Activated CD4-positive, alpha-beta memory T cell treated with anti-CD3 and anti-CD28 coated beads, Interleukin-2, amount 10 ng/mL, durations not matched to agents 7 days and 5 days (primary cell): ENCODE measurements at regions of chr9 and their contacts with region 1.

Region 1: GRCh38 chr9:137632230-137633161 is 13.7 kb downstream of the EHMT1 start:
- DNase-seq: no peak
- H3K4me3 Mint-ChIP-seq: no peak overlapping the region
- H3K27ac Mint-ChIP-seq: no peak overlapping the region
- H3K4me1 Mint-ChIP-seq: peaks cover 47% of the 10 kb centered on the region
- H3K27me3 Mint-ChIP-seq: no peaks in the 10 kb centered on the region

Region 2: DNA sequence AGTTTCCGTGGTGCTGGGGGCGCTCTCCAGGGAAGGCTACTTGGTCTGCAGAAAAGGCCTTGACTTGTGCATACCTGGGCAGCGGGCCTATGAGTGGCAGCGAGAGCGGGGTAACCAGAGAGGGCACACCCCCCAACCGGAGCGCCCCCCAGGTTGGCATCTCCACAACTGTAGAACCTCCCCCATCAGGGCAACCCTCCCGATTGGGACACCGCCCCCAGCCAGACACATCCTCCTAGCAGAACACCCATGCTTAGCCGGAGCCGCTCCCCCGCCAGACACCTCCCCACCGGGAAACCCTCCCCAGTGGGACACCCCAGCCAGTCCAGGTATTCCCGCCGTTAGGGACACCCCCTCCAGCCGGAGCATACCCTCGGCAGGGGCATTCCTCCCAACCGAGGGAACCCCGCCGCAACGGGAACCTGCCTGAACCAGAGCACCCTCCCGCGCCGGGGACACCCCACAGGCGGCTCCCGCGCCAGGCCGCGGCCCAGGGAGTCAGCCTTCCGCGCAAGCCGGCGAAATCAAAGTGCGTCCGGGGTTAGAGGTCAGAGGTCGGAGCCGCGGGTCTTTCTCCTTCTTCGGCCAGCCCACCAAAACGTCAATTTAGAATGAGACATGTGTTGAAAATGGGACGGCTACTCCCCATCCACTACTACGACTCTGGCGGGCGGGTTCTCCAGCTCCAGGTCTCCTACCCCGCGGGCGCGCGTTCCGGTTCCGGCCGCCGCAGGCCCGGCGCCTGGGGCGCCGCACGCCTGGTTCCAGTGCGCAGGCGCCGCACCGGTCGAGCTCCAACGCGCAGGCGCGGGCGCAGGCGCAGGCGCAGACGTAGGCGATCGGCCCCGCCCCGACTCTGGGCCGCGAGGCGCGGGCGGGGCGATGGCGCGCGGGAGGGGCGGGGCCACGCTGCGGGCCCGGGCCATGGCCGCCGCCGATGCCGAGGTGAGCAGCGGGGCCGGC is 14.1 kb before region 1 on chr9 and contains the start of gene EHMT1:
- CTCF ChIA-PET with region 1: interaction called, 4 read pairs
- POLR2A ChIA-PET with region 1: interaction called, 33 read pairs
- DNase-seq: peak; percentile 92
- H3K4me3 Mint-ChIP-seq: peak within 1 kb of the TSS; percentile 83
- H3K27ac Mint-ChIP-seq: peak within 1 kb of the TSS; percentile 88
- H3K4me1 Mint-ChIP-seq: peaks cover 41% of the 10 kb centered on the region
- H3K27me3 Mint-ChIP-seq: no peaks in the 10 kb centered on the region
- total RNA-seq, gene EHMT1: 87.1 to 91.4 TPM

Region 3: DNA sequence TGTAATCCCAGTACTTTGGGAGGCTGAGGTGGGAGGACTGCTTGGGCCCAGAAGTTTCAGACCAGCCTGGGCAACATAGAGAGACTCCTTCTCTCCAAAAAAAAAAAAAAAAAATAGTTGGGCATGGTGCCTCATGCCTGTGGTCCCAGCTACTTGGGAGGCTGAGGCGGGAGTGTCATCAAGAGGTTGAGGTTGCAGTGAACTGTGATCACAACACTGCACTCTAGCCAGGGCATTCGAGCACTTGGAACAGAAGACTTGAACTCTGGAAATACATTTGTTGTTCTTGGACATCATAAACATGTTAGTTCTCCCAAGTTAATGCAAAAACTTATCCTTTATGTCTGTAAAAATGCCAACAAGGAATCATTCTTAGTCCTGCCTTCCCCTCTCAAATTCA is 15.9 kb after region 1 on chr9:
- CTCF ChIA-PET with region 1: no interaction called
- POLR2A ChIA-PET with region 1: no interaction called
- DNase-seq: no peak
- H3K4me3 Mint-ChIP-seq: no peak overlapping the region
- H3K27ac Mint-ChIP-seq: no peak overlapping the region
- H3K4me1 Mint-ChIP-seq: peaks cover 42% of the 10 kb centered on the region
- H3K27me3 Mint-ChIP-seq: no peaks in the 10 kb centered on the region

Region 4: GRCh38 chr9:137672907-137673791 is 40.7 kb after region 1 on chr9:
- CTCF ChIA-PET with region 1: interaction called, 12 read pairs
- POLR2A ChIA-PET with region 1: no interaction called
- DNase-seq: peak; percentile 43
- H3K4me3 Mint-ChIP-seq: no peak overlapping the region
- H3K27ac Mint-ChIP-seq: no peak overlapping the region
- H3K4me1 Mint-ChIP-seq: peaks cover 20% of the 10 kb centered on the region
- H3K27me3 Mint-ChIP-seq: no peaks in the 10 kb centered on the region